ENCODE measurements at regions of chr20 and their contacts with region 1.

Region 1: GRCh38 chr20:36199345-36200257 is 36.7 kb upstream of the AAR2 start:
- DNase-seq: peak; percentile 66
- H3K4me3 ChIP-seq: no peak overlapping the region
- H3K27ac ChIP-seq: no peak overlapping the region
- H3K4me1 ChIP-seq: no peaks in the 10 kb centered on the region
- H3K27me3 ChIP-seq: peaks cover 0 to 4% of the 10 kb centered on the region in 2 experiments
- CTCF ChIP-seq: peak; percentile 86 to 91
- POLR2A ChIP-seq: no peak

Region 2: DNA sequence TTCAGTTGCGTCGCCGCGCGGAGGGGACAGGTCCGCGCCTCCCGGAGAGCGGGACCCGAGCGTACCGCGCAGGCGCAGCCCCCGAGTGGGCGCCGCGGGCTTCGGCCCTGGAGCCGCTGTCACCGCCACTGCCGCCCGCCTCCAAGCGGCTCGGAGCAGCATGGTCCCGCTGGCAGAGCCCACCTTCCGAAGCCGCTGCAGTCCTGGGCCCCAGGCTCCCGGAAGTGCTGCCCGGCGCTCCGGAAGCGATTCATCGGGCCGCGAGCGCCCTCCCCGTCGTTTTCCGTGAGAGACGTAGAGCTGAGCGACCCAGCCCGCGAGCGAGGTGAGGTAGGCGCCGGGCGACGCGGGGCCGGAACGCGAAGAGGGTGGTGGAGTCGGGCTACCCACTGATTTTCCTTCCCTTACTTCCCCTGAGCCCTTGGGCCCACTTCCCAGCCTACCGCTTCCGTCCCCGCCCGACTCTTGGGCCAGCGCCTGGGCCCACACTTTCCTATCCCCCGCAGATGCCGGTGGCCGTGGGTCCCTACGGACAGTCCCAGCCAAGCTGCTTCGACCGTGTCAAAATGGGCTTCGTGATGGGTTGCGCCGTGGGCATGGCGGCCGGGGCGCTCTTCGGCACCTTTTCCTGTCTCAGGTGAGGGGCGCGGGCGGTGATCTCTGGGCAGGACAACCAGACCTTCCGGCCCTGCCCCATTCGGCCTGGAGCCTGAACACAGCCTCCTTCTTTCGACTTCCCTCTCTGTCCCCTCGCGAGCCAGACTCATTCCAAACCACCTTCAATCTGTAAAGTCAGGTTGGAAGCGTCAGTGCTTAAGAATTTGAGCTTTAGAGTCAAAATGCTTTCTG is 500.2 kb before region 1 on chr20 and contains the starts of genes NFS1 and ROMO1:
- CTCF ChIA-PET with region 1: no interaction called
- POLR2A ChIA-PET with region 1: no interaction called
- dilution Hi-C with region 1: no loop called
- intact Hi-C with region 1: no loop called
- DNase-seq: peak; percentile 89
- H3K4me3 ChIP-seq: peak within 1 kb of the TSS; percentile 44 to 91 (median 87)
- H3K27ac ChIP-seq: peak within 1 kb of the TSS; percentile 65
- H3K4me1 ChIP-seq: peaks cover 17% of the 10 kb centered on the region
- H3K27me3 ChIP-seq: no peaks in the 10 kb centered on the region
- CTCF ChIP-seq: peak; percentile 14 to 43
- POLR2A ChIP-seq: peak; percentile 95
- total RNA-seq, gene NFS1: 24.0 and 25.1 TPM in 2 replicates
- total RNA-seq, gene ROMO1: 169 and 174 TPM in 2 replicates

Region 3: DNA sequence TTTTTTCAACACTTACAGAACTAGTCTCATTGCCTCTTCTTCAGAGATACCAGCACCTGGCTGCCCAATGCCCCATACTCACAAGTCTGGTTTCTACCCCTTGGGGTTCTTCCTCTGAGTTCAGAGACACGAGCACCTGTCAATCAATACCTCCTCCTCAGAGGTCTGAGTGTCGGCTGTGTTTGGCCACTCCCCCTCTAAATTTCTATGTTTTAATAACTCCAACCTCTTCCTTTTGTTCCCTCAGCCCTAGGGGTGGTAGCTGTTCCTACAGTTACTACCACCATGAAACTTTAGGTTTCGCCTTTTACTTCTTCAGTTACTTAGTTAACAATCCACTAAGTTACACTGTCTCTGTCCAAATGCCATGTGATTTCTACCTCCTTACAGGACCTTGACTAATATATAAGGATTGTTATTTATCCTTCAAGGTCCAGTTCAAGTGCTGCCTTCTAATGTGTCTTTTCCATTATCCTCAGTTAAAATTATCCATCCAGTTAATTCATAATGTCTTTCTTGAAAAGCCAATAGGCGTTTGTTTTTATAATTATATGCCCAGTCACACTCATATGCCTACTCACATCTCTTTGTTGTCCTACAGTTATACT is 442.4 kb before region 1 on chr20:
- CTCF ChIA-PET with region 1: no interaction called
- POLR2A ChIA-PET with region 1: no interaction called
- dilution Hi-C with region 1: no loop called
- intact Hi-C with region 1: no loop called
- DNase-seq: no peak
- H3K4me3 ChIP-seq: no peak overlapping the region
- H3K27ac ChIP-seq: no peak overlapping the region
- H3K4me1 ChIP-seq: no peaks in the 10 kb centered on the region
- H3K27me3 ChIP-seq: no peaks in the 10 kb centered on the region
- CTCF ChIP-seq: no peak
- POLR2A ChIP-seq: no peak

Region 4: DNA sequence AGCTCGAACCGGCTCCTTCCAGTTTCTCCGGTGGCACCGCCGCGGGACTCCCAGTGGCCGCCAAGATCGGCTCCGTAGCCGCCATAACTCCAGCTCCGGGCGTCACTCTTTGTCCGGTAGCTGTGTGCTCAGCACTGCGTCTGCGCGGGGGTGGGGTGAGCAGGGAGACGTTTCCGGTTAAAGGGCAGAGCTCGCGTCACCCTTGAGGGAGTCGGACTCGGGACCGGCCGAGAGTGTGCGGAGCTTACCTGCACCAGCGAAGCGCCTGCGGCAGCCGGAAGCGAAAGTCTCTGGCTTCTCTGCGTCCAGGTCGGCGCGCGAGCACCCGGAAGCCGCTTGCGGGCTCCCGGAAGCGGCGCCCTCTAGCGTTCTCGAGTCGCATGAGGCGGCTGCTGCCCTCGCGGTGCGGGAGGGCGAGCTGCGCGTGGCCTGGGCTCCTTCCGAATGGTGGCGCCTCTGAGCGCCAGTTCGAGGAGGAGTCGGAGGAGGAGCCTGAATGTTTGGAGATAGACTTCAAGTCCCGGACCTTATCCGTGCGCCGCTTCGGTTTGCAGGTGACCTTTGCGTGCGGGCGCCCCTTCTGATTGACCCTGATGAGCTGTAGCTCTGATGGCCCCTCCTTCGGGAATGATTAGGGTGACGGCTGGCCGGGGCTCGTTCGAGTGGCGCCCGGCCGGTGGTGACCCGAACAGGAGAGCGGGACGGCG is 245.2 kb before region 1 on chr20 and contains the start of gene SCAND1:
- CTCF ChIA-PET with region 1: interaction called, 10 read pairs
- POLR2A ChIA-PET with region 1: no interaction called
- dilution Hi-C with region 1: no loop called
- intact Hi-C with region 1: no loop called
- DNase-seq: peak; percentile 98
- H3K4me3 ChIP-seq: peak within 1 kb of the TSS; percentile 39 to 93 (median 82)
- H3K27ac ChIP-seq: peak within 1 kb of the TSS; percentile 94
- H3K4me1 ChIP-seq: peaks cover 17% of the 10 kb centered on the region
- H3K27me3 ChIP-seq: no peaks in the 10 kb centered on the region
- CTCF ChIP-seq: peak; percentile 99
- POLR2A ChIP-seq: peak; percentile 79
- total RNA-seq, gene SCAND1: 83.1 and 83.5 TPM in 2 replicates

Region 5: GRCh38 chr20:36154700-36155628 is 44.6 kb before region 1 on chr20 and contains the start of gene EPB41L1:
- CTCF ChIA-PET with region 1: interaction called, 197 read pairs
- POLR2A ChIA-PET with region 1: no interaction called
- dilution Hi-C with region 1: no loop called
- intact Hi-C with region 1: loop called (anchors 1 kb)
- DNase-seq: no peak
- H3K4me3 ChIP-seq: peak within 1 kb of the TSS; percentile 30 to 44 (median 35)
- H3K27ac ChIP-seq: no peak within 1 kb of the TSS
- H3K4me1 ChIP-seq: peaks cover 12% of the 10 kb centered on the region
- H3K27me3 ChIP-seq: no peaks in the 10 kb centered on the region
- CTCF ChIP-seq: no peak
- POLR2A ChIP-seq: no peak
- total RNA-seq, gene EPB41L1: 11.1 and 12.2 TPM in 2 replicates

Region 6: DNA sequence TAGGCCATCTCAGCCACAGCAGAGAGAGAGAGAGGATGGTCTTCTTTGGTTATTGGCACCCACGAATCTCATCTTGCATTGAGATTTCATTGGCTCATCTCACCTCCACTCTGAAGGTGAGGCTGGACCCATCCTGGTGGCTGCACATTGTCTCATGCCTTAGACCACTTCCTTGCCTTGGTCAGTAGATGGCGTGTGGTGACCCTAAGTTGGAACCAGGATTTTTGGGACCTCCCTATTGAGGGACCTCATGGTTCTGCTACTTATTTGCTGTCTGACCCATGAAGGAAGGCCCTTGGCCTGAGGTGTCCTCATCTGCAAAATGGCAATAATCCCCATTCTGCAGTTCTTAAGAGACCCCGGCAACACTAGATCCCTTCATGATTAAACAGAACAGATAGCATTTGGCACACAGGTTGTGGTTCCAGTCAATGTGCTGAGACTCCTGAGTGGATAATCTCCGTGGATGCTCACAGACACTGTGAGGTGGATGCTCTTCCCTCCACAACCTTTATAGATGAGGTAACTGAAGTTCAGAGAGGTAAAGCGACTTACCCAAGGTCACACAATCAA is 15.2 kb after region 1 on chr20:
- CTCF ChIA-PET with region 1: interaction called, 49 read pairs
- POLR2A ChIA-PET with region 1: no interaction called
- dilution Hi-C with region 1: no loop called
- intact Hi-C with region 1: no loop called
- DNase-seq: peak; percentile 19
- H3K4me3 ChIP-seq: no peak overlapping the region
- H3K27ac ChIP-seq: no peak overlapping the region
- H3K4me1 ChIP-seq: no peaks in the 10 kb centered on the region
- H3K27me3 ChIP-seq: peaks cover 0 to 2% of the 10 kb centered on the region in 2 experiments
- CTCF ChIP-seq: peak; percentile 49 to 60
- POLR2A ChIP-seq: no peak

Region 7: GRCh38 chr20:36246391-36246790 is 46.8 kb after region 1 on chr20:
- CTCF ChIA-PET with region 1: interaction called, 10 read pairs
- POLR2A ChIA-PET with region 1: no interaction called
- dilution Hi-C with region 1: no loop called
- intact Hi-C with region 1: no loop called
- DNase-seq: no peak
- H3K4me3 ChIP-seq: no peak overlapping the region
- H3K27ac ChIP-seq: no peak overlapping the region
- H3K4me1 ChIP-seq: no peaks in the 10 kb centered on the region
- H3K27me3 ChIP-seq: no peaks in the 10 kb centered on the region
- CTCF ChIP-seq: no peak
- POLR2A ChIP-seq: no peak

Region 8: GRCh38 chr20:36421641-36422040 is 222.0 kb after region 1 on chr20:
- CTCF ChIA-PET with region 1: interaction called, 15 read pairs
- POLR2A ChIA-PET with region 1: no interaction called
- dilution Hi-C with region 1: no loop called
- intact Hi-C with region 1: no loop called
- DNase-seq: no peak
- H3K4me3 ChIP-seq: no peak overlapping the region
- H3K27ac ChIP-seq: no peak overlapping the region
- H3K4me1 ChIP-seq: no peaks in the 10 kb centered on the region
- H3K27me3 ChIP-seq: no peaks in the 10 kb centered on the region
- CTCF ChIP-seq: no peak
- POLR2A ChIP-seq: no peak

Region 9: DNA sequence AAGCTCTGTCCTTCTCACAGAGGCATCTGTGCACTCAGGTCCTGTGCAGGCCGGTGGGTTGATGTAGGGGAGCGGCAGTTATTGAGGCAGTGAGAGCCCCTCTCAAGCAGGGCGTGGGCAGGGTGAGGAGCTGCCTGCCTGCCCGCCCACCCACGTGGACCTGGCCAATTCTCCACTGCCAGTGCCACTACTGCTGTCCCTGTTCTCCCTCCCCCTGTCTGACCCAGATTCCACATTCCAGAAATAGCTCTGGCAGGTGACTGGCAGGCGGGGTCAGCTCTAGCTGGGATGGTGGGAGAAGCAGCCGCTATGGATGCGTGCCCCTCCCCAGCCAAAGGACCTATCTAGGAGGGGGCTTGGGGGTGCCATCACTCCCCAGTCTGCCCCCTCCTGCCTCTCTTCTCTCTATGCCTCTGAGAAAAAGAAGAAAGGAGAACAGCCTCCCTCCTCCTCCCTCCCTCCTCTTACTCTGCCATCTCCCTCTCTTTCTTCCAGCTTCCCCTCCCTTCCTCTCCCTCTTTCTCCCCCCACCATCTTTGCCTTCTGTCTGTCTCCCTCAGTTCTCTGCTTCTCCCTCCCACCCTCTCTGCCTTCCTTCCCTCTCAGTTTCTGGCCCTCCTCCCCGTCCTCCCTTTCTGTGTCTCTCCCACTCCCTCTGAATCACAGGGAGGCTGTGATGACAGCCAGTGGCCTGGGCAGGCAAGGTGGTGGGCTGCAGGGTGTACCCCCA is 255.3 kb after region 1 on chr20:
- CTCF ChIA-PET with region 1: interaction called, 11 read pairs
- POLR2A ChIA-PET with region 1: no interaction called
- dilution Hi-C with region 1: no loop called
- intact Hi-C with region 1: no loop called
- DNase-seq: no peak
- H3K4me3 ChIP-seq: no peak overlapping the region
- H3K27ac ChIP-seq: no peak overlapping the region
- H3K4me1 ChIP-seq: no peaks in the 10 kb centered on the region
- H3K27me3 ChIP-seq: peaks cover 3 to 15% of the 10 kb centered on the region in 2 experiments
- CTCF ChIP-seq: no peak
- POLR2A ChIP-seq: no peak